ENCODE measurements at regions of chr1 and their contacts with region 1.

Region 1: DNA sequence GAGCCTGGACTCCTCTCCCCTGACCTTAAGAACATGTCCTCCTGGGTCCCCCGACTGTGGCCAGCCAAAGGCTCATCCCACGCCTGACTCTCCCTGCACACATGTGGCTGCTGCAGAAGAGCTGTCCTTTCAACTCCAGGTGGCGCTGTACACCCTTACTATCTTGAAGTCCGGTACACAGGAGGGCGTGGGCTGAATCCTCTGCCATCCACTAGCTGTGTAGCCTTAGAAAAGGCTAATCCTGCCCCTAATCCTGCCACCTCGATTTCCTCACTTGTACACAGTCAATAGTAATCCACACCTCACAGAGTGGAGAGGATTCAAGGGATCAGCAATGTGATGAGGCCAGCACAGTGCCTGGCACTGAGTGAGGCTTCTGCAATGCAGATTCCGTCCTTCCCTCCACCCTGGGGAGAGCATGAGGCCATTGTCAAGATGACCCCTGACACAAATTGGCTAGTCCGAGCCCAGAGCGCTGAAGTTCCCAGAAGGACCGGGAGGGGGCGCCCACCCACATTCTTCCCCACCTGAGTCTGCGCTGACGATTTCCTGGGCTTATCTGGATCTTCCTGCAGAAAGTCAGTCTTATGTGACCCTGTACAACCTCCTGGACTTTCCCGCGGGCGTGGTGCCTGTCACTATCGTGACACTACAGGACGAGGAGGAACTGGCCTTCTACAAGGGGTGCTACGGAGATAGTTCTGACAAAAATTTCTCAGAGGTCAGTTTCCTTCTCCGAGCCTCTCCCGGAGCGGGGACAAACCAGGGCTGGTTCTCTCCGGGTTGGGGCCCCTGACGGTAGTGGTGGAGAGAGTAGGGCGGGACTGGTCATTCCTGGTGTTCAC is 47.1 kb upstream of the DMBX1 start:
- DNase-seq: peak; percentile 86
- ATAC-seq: peak; percentile 86
- H3K4me3 Mint-ChIP-seq: peak overlapping the region; percentile 79
- H3K27ac Mint-ChIP-seq: peak overlapping the region; percentile 40
- H3K4me1 Mint-ChIP-seq: peaks cover 10% of the 10 kb centered on the region
- H3K27me3 Mint-ChIP-seq: peaks cover 18% of the 10 kb centered on the region
- CTCF ChIP-seq: peak; percentile 99

Region 2: GRCh38 chr1:46352363-46352762 is 90.2 kb before region 1 on chr1:
- CTCF ChIA-PET with region 1: no interaction called
- POLR2A ChIA-PET with region 1: no interaction called
- intact Hi-C with region 1: no loop called
- DNase-seq: no peak
- ATAC-seq: no peak
- H3K4me3 Mint-ChIP-seq: no peak overlapping the region
- H3K27ac Mint-ChIP-seq: no peak overlapping the region
- H3K4me1 Mint-ChIP-seq: peaks cover 6% of the 10 kb centered on the region
- H3K27me3 Mint-ChIP-seq: no peaks in the 10 kb centered on the region
- CTCF ChIP-seq: no peak

Region 3: DNA sequence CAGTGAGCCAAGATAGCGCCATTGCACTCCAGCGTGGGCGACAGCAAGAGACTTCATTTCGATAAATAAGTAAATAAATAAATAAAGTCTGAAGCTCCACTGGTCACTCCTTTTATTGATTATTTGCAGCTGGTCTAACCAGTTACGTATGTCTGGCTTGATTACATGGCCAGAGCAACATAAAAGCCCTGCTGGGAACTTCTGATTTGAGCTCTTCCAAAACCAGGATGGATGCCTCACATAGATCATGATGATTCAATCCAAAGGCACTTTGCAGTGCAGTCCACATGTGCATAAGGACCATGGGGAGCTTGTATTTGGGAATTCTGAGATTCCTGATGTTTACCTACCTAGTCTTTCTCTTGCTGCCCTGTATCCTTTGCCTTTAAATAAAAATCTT is 77.9 kb before region 1 on chr1:
- CTCF ChIA-PET with region 1: no interaction called
- POLR2A ChIA-PET with region 1: no interaction called
- intact Hi-C with region 1: no loop called
- DNase-seq: no peak
- ATAC-seq: no peak
- H3K4me3 Mint-ChIP-seq: no peak overlapping the region
- H3K27ac Mint-ChIP-seq: no peak overlapping the region
- H3K4me1 Mint-ChIP-seq: peaks cover 3% of the 10 kb centered on the region
- H3K27me3 Mint-ChIP-seq: no peaks in the 10 kb centered on the region
- CTCF ChIP-seq: no peak

Region 4: DNA sequence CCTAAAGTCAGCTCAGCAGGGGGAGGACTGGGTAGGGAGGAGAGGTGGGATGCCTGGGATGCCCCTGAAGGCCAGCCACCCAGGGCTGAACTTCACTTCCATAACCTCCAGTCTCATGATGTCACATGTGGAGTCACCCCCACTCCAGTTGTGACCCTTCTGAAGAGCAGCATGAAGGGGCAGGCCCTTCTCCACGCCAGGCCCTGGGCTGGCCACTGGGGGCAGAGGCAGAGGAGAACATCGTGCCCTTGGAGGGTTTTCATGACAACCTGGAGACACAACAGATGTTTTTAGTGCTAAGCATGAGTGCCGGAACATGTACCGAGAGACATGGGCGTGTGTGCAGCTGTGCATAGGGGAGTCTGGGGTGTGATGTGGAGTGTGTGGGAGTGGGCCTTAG is 10.8 kb before region 1 on chr1:
- CTCF ChIA-PET with region 1: interaction called, 49 read pairs
- POLR2A ChIA-PET with region 1: no interaction called
- intact Hi-C with region 1: no loop called
- DNase-seq: no peak
- ATAC-seq: no peak
- H3K4me3 Mint-ChIP-seq: no peak overlapping the region
- H3K27ac Mint-ChIP-seq: no peak overlapping the region
- H3K4me1 Mint-ChIP-seq: no peaks in the 10 kb centered on the region
- H3K27me3 Mint-ChIP-seq: peaks cover 7% of the 10 kb centered on the region
- CTCF ChIP-seq: no peak

Region 5: GRCh38 chr1:46547481-46548383 is 105.2 kb after region 1 on chr1:
- CTCF ChIA-PET with region 1: interaction called, 10 read pairs
- POLR2A ChIA-PET with region 1: no interaction called
- intact Hi-C with region 1: no loop called
- DNase-seq: peak; percentile 25
- ATAC-seq: peak; percentile 41
- H3K4me3 Mint-ChIP-seq: no peak overlapping the region
- H3K27ac Mint-ChIP-seq: no peak overlapping the region
- H3K4me1 Mint-ChIP-seq: peaks cover 11% of the 10 kb centered on the region
- H3K27me3 Mint-ChIP-seq: peaks cover 35% of the 10 kb centered on the region
- CTCF ChIP-seq: peak; percentile 57

Region 6: GRCh38 chr1:46757241-46757959 is 314.9 kb after region 1 on chr1:
- CTCF ChIA-PET with region 1: no interaction called
- POLR2A ChIA-PET with region 1: no interaction called
- intact Hi-C with region 1: no loop called
- DNase-seq: no peak
- ATAC-seq: no peak
- H3K4me3 Mint-ChIP-seq: no peak overlapping the region
- H3K27ac Mint-ChIP-seq: no peak overlapping the region
- H3K4me1 Mint-ChIP-seq: no peaks in the 10 kb centered on the region
- H3K27me3 Mint-ChIP-seq: peaks cover 14% of the 10 kb centered on the region
- CTCF ChIP-seq: no peak